CD4-positive, alpha-beta T cell (primary cell): ENCODE measurements at regions of chr19 and their contacts with region 1.

Region 1: DNA sequence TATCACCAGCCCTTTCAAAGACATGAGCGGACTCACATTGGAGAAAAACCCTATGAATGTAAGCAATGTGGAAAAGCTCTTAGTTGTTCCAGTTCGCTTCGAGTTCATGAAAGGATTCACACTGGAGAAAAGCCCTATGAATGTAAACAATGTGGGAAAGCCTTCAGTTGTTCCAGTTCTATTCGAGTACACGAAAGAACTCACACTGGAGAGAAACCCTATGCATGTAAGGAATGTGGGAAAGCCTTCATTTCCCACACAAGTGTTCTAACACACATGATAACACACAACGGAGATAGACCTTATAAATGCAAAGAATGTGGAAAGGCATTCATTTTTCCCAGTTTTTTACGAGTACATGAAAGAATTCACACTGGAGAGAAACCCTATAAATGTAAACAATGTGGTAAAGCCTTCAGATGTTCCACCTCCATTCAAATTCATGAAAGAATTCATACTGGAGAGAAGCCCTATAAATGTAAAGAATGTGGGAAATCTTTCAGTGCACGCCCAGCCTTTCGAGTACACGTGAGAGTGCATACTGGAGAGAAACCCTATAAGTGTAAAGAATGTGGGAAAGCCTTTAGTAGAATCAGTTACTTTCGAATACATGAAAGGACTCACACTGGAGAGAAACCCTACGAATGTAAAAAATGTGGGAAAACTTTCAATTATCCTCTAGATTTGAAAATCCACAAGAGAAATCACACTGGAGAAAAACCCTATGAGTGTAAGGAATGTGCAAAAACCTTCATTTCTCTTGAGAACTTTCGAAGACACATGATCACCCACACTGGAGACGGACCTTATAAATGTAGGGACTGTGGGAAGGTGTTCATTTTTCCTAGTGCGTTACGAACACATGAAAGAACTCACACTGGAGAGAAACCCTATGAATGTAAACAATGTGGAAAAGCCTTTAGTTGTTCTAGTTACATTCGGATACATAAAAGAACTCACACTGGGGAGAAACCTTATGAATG is 17.6 kb downstream of the ZNF791 start:
- DNase-seq: no peak
- ATAC-seq: no peak
- H3K4me3 ChIP-seq: no peak overlapping the region
- H3K4me3 Mint-ChIP-seq: no peak overlapping the region
- H3K27ac ChIP-seq: no peak overlapping the region
- H3K27ac Mint-ChIP-seq: no peak overlapping the region
- H3K4me1 ChIP-seq: no peaks in the 10 kb centered on the region
- H3K4me1 Mint-ChIP-seq: peaks cover 11% of the 10 kb centered on the region
- H3K27me3 ChIP-seq: no peaks in the 10 kb centered on the region
- H3K27me3 Mint-ChIP-seq: no peaks in the 10 kb centered on the region
- CTCF ChIP-seq: no peak

Region 2: GRCh38 chr19:12610540-12611360 is 17.6 kb before region 1 on chr19 and contains the starts of genes ZNF490 and ZNF791:
- CTCF ChIA-PET with region 1: interaction called, 4 read pairs
- POLR2A ChIA-PET with region 1: interaction called, 10 read pairs
- intact Hi-C with region 1: no loop called
- DNase-seq: peak; percentile 92 to 99 (median 96)
- ATAC-seq: peak; percentile 76
- H3K4me3 ChIP-seq: peak within 1 kb of the TSS; percentile 99
- H3K4me3 Mint-ChIP-seq: peak within 1 kb of the TSS; percentile 100
- H3K27ac ChIP-seq: peak within 1 kb of the TSS; percentile 85 to 88
- H3K27ac Mint-ChIP-seq: peak within 1 kb of the TSS; percentile 100
- H3K4me1 ChIP-seq: peaks cover 45% of the 10 kb centered on the region
- H3K4me1 Mint-ChIP-seq: peaks cover 40% of the 10 kb centered on the region
- H3K27me3 ChIP-seq: no peaks in the 10 kb centered on the region
- H3K27me3 Mint-ChIP-seq: no peaks in the 10 kb centered on the region
- CTCF ChIP-seq: no peak
- total RNA-seq, gene ZNF490: 6.2 to 7.1 TPM
- total RNA-seq, gene ZNF791: 102 to 103 TPM

Region 3: GRCh38 chr19:12715102-12715501 is 86.8 kb after region 1 on chr19:
- CTCF ChIA-PET with region 1: no interaction called
- POLR2A ChIA-PET with region 1: no interaction called
- intact Hi-C with region 1: no loop called
- DNase-seq: peak in 1 of 14 experiments; percentile 21
- ATAC-seq: no peak
- H3K4me3 ChIP-seq: no peak overlapping the region
- H3K4me3 Mint-ChIP-seq: no peak overlapping the region
- H3K27ac ChIP-seq: no peak overlapping the region
- H3K27ac Mint-ChIP-seq: no peak overlapping the region
- H3K4me1 ChIP-seq: peaks cover 1% of the 10 kb centered on the region
- H3K4me1 Mint-ChIP-seq: peaks cover 12% of the 10 kb centered on the region
- H3K27me3 ChIP-seq: no peaks in the 10 kb centered on the region
- H3K27me3 Mint-ChIP-seq: no peaks in the 10 kb centered on the region
- CTCF ChIP-seq: no peak